CD4-positive, alpha-beta T cell (primary cell): ENCODE measurements at regions of chr10 and their contacts with region 1.

Region 1: DNA sequence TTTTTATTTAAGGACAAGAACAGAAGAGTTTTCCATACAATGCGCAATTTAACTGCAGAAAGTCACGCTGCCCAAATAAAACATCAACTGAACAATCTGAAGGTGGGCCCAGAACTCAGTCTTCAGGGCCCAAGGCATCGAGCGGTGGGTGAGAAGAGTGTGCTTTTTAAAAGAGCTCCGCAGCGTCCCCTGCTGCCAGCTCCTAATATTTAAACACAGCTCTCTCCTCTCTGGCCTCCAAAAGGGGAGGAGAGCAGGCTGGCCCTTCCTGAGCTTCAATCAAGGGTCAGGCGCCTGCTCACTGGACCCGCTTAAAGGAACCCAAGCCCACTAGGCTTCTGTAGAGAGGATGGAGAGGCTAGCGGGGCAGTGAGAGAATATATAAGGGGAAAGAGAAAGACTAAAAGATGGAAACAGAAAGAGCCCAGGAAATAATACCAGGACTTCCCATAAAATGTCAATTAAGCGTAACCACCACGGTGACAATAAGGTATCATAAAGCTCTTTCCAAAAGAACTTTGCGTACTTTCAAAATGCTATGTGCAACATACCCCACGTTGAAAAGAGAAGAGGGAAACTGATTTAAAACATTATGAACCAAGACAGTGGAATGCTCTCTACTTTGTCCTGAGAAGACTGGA is 2.8 kb downstream of the FAM53B start:
- DNase-seq: peak; percentile 66 to 87 (median 74)
- ATAC-seq: peak; percentile 58
- H3K4me3 ChIP-seq: peak overlapping the region; percentile 83
- H3K4me3 Mint-ChIP-seq: peak overlapping the region; percentile 99
- H3K27ac ChIP-seq: peak overlapping the region; percentile 51 to 60
- H3K27ac Mint-ChIP-seq: peak overlapping the region; percentile 88
- H3K4me1 ChIP-seq: peaks cover 69% of the 10 kb centered on the region
- H3K4me1 Mint-ChIP-seq: peaks cover 84% of the 10 kb centered on the region
- H3K27me3 ChIP-seq: no peaks in the 10 kb centered on the region
- H3K27me3 Mint-ChIP-seq: no peaks in the 10 kb centered on the region
- CTCF ChIP-seq: peak; percentile 93

Region 2: GRCh38 chr10:124152916-124153826 is 588.2 kb before region 1 on chr10:
- CTCF ChIA-PET with region 1: no interaction called
- POLR2A ChIA-PET with region 1: no interaction called
- intact Hi-C with region 1: no loop called
- DNase-seq: peak in 13 of 14 experiments; percentile 4 to 69 (median 34)
- ATAC-seq: peak; percentile 79
- H3K4me3 ChIP-seq: peak overlapping the region; percentile 33
- H3K4me3 Mint-ChIP-seq: no peak overlapping the region
- H3K27ac ChIP-seq: no peak overlapping the region
- H3K27ac Mint-ChIP-seq: no peak overlapping the region
- H3K4me1 ChIP-seq: peaks cover 22% of the 10 kb centered on the region
- H3K4me1 Mint-ChIP-seq: peaks cover 9% of the 10 kb centered on the region
- H3K27me3 ChIP-seq: peaks cover 0 to 3% of the 10 kb centered on the region in 2 experiments
- H3K27me3 Mint-ChIP-seq: no peaks in the 10 kb centered on the region
- CTCF ChIP-seq: no peak

Region 3: DNA sequence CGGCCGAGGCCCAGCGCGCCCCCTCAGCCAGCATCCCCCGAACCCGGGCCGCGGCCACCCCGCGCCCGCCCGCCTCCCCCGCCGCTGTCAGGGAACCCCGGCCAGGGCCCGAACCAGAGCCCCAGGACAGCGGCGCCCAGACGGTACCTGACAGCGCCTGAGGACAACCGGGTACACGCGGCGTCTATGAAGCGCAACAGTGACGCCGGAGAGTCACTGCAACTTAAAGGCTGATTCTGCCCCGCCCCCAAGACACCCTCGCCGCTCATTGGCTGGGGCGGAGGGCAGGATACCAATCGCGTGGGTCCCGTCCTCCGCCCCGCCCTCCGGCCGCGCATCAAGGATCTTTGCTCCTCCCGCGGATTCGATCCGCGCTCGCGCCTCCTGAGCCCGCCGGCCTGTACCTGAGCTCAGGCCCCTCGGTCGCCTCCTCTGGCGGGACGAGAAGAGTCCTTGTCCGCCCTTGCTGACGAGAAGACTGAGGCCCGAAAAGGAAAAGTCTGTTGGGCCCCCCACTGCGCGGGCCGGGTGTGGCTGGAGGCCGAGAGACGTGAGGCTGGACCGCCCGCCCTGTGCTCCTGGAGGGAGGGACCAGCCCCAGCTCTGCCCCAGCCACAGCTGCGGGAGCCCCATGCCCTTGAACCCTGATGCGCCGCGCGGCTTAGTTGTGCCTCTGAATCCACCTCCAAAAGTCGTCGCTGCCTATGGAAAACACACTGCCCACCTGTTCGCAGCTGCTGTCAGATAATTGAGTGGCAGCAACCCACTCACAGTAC is 322.5 kb before region 1 on chr10 and contains the start of gene OAT:
- CTCF ChIA-PET with region 1: no interaction called
- POLR2A ChIA-PET with region 1: no interaction called
- intact Hi-C with region 1: loop called in 1 of 2 experiments (anchors 5 kb)
- DNase-seq: peak; percentile 91 to 98 (median 96)
- ATAC-seq: peak; percentile 97
- H3K4me3 ChIP-seq: peak within 1 kb of the TSS; percentile 75
- H3K4me3 Mint-ChIP-seq: peak within 1 kb of the TSS; percentile 92
- H3K27ac ChIP-seq: peak within 1 kb of the TSS; percentile 23 to 44
- H3K27ac Mint-ChIP-seq: peak within 1 kb of the TSS; percentile 82
- H3K4me1 ChIP-seq: peaks cover 14% of the 10 kb centered on the region
- H3K4me1 Mint-ChIP-seq: peaks cover 41% of the 10 kb centered on the region
- H3K27me3 ChIP-seq: peaks cover 0 to 3% of the 10 kb centered on the region in 2 experiments
- H3K27me3 Mint-ChIP-seq: peaks cover 9% of the 10 kb centered on the region
- CTCF ChIP-seq: no peak
- total RNA-seq, gene OAT: 48.5 to 54.9 TPM

Region 4: DNA sequence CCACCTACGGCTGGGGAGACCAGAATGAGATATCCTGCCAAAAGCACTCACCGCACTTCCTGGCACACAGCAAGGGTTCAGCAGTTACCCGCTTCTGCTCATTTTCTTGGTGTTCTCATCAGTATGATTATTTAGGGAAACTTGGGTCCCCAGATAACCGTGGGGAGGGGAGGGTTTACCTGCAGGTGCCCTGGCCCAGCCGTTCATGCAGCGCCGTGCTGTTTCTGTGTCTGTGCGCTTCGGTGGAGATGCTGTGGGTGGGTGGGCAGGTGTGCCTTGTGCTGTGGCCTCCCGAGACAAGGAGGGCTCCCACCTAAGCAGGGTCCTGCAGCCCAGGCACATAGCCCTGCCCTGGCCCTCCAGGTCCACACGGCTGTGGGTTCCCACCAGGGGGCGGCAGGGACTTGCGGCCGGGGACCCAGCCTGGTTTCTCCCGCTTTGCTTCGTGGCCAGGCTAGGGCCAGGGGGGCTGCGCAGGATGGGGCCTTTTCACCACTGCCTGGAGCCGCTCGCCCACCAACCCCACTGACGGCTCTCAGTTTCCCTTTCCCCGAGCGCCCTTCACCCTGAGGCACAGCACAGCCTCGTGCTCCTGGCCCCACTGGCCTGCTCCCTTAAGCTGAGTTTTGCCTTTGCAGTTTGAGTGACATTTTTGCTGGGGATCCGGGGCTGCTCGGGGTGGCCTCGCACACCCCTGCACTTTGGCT is 201.3 kb before region 1 on chr10:
- CTCF ChIA-PET with region 1: interaction called, 28 read pairs
- POLR2A ChIA-PET with region 1: interaction called, 21 read pairs
- intact Hi-C with region 1: loop called (anchors 1 kb)
- DNase-seq: peak; percentile 55 to 82 (median 69)
- ATAC-seq: peak; percentile 90
- H3K4me3 ChIP-seq: no peak overlapping the region
- H3K4me3 Mint-ChIP-seq: no peak overlapping the region
- H3K27ac ChIP-seq: no peak overlapping the region
- H3K27ac Mint-ChIP-seq: no peak overlapping the region
- H3K4me1 ChIP-seq: peaks cover 13% of the 10 kb centered on the region
- H3K4me1 Mint-ChIP-seq: peaks cover 9% of the 10 kb centered on the region
- H3K27me3 ChIP-seq: no peaks in the 10 kb centered on the region
- H3K27me3 Mint-ChIP-seq: no peaks in the 10 kb centered on the region
- CTCF ChIP-seq: peak; percentile 70

Region 5: DNA sequence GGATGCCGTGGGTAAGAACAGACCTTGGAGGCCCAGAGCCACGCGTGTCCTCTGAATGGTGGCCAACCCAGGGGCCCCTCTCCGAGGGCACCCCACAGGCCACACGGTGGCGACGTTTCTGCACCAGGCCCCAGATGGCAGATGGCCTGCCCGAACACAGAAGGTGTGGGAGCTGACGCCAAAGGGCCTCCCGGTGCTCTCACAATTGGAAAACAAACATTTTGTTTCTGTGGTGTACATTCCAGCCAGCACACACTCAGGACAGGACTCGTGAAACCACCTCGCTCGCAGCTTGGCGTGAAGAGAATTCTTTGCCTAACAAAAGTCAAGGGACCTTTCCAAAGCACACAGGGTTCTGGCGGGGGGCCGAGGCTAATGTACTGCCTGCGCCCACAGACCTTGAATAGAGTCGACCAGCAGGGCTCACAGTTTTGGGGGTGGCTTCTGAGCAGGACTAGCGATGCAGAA is 109.3 kb before region 1 on chr10:
- CTCF ChIA-PET with region 1: interaction called, 23 read pairs
- POLR2A ChIA-PET with region 1: interaction called, 11 read pairs
- intact Hi-C with region 1: loop called (anchors 1 to 2 kb)
- DNase-seq: peak in 11 of 14 experiments; percentile 23 to 67 (median 43)
- ATAC-seq: no peak
- H3K4me3 ChIP-seq: no peak overlapping the region
- H3K4me3 Mint-ChIP-seq: no peak overlapping the region
- H3K27ac ChIP-seq: no peak overlapping the region
- H3K27ac Mint-ChIP-seq: peak overlapping the region; percentile 49
- H3K4me1 ChIP-seq: peaks cover 74% of the 10 kb centered on the region
- H3K4me1 Mint-ChIP-seq: peaks cover 72% of the 10 kb centered on the region
- H3K27me3 ChIP-seq: no peaks in the 10 kb centered on the region
- H3K27me3 Mint-ChIP-seq: no peaks in the 10 kb centered on the region
- CTCF ChIP-seq: no peak

Region 6: GRCh38 chr10:124671486-124672075 is 69.8 kb before region 1 on chr10:
- CTCF ChIA-PET with region 1: interaction called, 11 read pairs
- POLR2A ChIA-PET with region 1: interaction called, 5 read pairs
- intact Hi-C with region 1: loop called in 1 of 2 experiments (anchors 1 kb)
- DNase-seq: peak in 3 of 14 experiments; percentile 47 to 51 (median 50)
- ATAC-seq: peak; percentile 47
- H3K4me3 ChIP-seq: no peak overlapping the region
- H3K4me3 Mint-ChIP-seq: peak overlapping the region; percentile 70
- H3K27ac ChIP-seq: peak overlapping the region in 1 of 2 donors; percentile 33
- H3K27ac Mint-ChIP-seq: peak overlapping the region; percentile 73
- H3K4me1 ChIP-seq: peaks cover 98% of the 10 kb centered on the region
- H3K4me1 Mint-ChIP-seq: peaks cover 92% of the 10 kb centered on the region
- H3K27me3 ChIP-seq: no peaks in the 10 kb centered on the region
- H3K27me3 Mint-ChIP-seq: no peaks in the 10 kb centered on the region
- CTCF ChIP-seq: no peak

Region 7: DNA sequence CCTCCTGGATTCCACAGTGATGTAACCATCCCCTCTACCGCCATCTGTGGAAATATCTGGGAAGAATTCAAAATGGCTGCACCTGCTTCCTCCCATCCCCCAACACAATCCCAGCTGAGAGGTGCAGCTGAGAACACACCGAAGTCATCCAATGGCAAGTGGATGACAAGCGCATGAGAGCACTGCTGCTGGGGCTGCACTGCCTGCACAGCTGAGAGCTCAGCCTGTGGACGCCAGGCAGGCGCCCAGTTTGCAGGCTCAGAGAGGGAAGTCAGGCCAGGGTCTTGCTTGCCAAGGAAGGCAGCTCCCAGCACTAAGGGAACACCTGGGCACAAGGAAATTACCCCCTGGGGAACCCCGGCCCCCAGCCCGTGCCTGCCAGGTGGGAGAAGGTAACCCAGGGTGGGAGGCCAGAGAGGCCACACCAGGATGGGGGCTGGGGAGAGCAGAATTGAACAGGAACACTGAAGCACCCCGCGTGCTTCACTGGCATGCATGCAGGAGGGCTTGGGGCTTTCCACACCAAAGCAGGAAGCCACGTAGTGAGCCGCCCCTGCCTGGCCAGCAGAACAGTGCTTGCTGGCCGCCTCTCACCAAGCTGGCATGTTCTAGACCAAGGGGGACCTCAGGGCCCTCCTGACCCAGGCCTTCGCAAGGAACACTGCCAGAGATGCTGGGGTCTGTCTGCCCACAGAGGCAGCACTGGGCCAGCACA is 43.4 kb before region 1 on chr10:
- CTCF ChIA-PET with region 1: interaction called, 22 read pairs
- POLR2A ChIA-PET with region 1: interaction called, 13 read pairs
- intact Hi-C with region 1: no loop called
- DNase-seq: peak in 11 of 14 experiments; percentile 32 to 81 (median 43)
- ATAC-seq: peak; percentile 59
- H3K4me3 ChIP-seq: no peak overlapping the region
- H3K4me3 Mint-ChIP-seq: peak overlapping the region; percentile 42
- H3K27ac ChIP-seq: peak overlapping the region; percentile 74 to 85
- H3K27ac Mint-ChIP-seq: peak overlapping the region; percentile 91
- H3K4me1 ChIP-seq: peaks cover 97% of the 10 kb centered on the region
- H3K4me1 Mint-ChIP-seq: peaks cover 95% of the 10 kb centered on the region
- H3K27me3 ChIP-seq: no peaks in the 10 kb centered on the region
- H3K27me3 Mint-ChIP-seq: no peaks in the 10 kb centered on the region
- CTCF ChIP-seq: no peak

Region 8: DNA sequence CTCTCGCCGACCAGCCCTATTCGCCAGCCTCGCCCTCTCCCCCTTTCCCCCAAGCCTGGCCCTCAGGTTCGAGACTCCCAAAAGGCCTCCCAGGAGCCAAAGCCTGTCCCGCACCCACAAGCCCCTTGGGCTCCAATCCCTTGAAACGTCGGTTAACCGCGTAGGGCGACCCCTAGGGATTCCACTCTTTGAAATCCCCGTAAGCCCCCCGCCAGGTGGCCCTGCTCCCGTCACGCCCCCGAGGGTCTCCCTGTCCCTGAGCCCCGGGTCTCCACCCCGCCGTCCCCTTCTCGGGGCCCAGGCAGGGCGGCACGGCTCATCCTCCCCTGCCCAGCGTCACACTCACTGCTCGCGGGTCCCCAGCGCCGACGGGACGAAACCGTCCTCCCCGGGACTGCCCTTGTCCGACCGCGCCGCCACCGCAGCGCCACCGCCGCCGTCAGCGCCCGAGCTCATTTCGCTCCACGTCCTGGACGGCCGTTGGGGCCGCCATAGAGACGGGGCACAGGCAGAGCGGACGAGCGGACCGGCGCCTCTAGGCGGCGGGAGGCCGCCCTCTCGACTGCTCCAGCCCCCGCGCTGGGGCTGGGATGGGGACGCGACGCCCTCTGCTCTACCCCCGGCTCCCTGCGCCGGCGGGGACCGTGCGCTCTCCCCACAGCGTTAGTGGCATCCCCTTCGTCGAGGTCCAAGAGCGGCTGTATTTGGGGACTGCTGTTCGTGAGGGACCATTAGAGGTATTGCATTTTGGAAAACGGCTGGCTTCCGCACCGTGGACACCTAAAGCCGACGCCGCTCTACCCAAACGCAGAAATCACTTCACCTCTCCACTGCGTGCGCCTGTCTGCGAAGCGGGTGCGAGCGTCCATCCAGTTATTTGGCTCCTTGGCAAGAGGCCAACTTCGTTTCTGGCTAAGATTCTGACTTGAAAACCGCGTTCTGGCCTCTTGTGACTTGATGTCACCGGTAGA is 50.3 kb after region 1 on chr10 and contains the start of gene EEF1AKMT2:
- CTCF ChIA-PET with region 1: interaction called, 3 read pairs
- POLR2A ChIA-PET with region 1: interaction called, 5 read pairs
- intact Hi-C with region 1: loop called in 1 of 2 experiments (anchors 10 kb)
- DNase-seq: peak; percentile 61 to 92 (median 78)
- ATAC-seq: peak; percentile 92
- H3K4me3 ChIP-seq: peak within 1 kb of the TSS; percentile 80
- H3K4me3 Mint-ChIP-seq: peak within 1 kb of the TSS; percentile 99
- H3K27ac ChIP-seq: peak within 1 kb of the TSS; percentile 65 to 74
- H3K27ac Mint-ChIP-seq: peak within 1 kb of the TSS; percentile 92
- H3K4me1 ChIP-seq: peaks cover 15% of the 10 kb centered on the region
- H3K4me1 Mint-ChIP-seq: peaks cover 22% of the 10 kb centered on the region
- H3K27me3 ChIP-seq: no peaks in the 10 kb centered on the region
- H3K27me3 Mint-ChIP-seq: no peaks in the 10 kb centered on the region
- CTCF ChIP-seq: no peak
- total RNA-seq, gene EEF1AKMT2: 14.4 to 16.7 TPM